Left cardiac atrium (tissue), 4 donors: ENCODE measurements at regions of chr13 and their contacts with region 1.

Region 1: GRCh38 chr13:43558939-43559338 is 227.8 kb downstream of the ENOX1 start:
- DNase-seq: no peak
- ATAC-seq: peak in 1 of 2 donors; percentile 62

Region 2: GRCh38 chr13:43664700-43665191 is 105.8 kb after region 1 on chr13:
- intact Hi-C with region 1: no loop called
- DNase-seq: peak; percentile 36
- ATAC-seq: peak; percentile 48 to 79

Region 3: DNA sequence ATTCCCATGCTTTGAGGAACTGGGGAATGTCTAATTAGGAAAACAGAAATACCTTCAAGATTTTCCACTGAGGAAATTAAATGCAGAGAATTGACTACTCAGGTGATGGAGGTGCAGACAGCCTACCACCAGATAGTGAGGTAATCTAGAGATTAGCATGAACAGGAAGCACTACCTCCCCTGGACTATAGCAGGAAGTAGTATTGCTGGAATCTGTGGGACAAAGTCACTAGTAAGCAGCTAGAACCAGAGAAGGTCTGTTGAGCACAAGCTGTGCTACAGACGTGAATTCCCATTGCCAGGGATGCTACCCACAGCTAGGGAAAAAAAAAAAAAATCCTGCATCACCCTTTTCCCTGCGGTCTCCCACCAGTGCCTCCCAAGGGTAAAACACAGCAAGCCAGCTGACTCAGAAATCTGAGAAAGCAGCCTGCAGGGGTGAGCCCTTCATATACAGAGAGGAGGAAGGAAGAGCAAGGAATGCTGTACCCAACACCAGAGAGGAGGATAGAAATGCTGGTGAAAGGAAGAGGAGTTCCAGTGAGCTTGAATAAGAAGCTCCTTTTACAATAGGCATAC is 217.7 kb after region 1 on chr13:
- intact Hi-C with region 1: loop called in 1 of 2 experiments (anchors 10 kb)
- DNase-seq: no peak
- ATAC-seq: no peak